SK-N-SH (cell line): ENCODE measurements at regions of chr10 and their contacts with region 1.

Region 1: DNA sequence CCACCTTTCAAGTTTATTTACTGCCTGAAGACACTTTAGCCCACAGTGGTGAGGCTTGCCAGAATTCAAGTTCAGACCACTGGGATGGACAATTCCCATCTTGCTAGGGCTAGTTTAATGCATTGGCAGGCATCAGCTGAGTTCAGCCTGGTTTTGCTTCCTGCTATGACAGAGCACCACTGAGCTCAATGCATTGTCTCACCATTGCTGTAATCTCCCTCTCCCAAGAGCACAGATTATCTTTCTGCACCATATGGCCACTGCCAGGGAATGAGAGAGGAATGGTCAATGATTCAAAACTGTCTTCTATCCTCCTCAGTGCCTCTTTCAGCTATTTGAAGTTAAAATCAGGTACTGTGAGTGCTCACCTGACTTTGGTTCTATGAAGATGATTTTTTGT is 160.8 kb downstream of the XPNPEP1 start:
- DNase-seq: no peak
- H3K4me3 ChIP-seq: no peak overlapping the region
- H3K27ac ChIP-seq: no peak overlapping the region
- H3K4me1 ChIP-seq: no peaks in the 10 kb centered on the region
- H3K27me3 ChIP-seq: no peaks in the 10 kb centered on the region
- CTCF ChIP-seq: no peak
- EP300 ChIP-seq: no peak
- RAD21 ChIP-seq: no peak

Region 2: DNA sequence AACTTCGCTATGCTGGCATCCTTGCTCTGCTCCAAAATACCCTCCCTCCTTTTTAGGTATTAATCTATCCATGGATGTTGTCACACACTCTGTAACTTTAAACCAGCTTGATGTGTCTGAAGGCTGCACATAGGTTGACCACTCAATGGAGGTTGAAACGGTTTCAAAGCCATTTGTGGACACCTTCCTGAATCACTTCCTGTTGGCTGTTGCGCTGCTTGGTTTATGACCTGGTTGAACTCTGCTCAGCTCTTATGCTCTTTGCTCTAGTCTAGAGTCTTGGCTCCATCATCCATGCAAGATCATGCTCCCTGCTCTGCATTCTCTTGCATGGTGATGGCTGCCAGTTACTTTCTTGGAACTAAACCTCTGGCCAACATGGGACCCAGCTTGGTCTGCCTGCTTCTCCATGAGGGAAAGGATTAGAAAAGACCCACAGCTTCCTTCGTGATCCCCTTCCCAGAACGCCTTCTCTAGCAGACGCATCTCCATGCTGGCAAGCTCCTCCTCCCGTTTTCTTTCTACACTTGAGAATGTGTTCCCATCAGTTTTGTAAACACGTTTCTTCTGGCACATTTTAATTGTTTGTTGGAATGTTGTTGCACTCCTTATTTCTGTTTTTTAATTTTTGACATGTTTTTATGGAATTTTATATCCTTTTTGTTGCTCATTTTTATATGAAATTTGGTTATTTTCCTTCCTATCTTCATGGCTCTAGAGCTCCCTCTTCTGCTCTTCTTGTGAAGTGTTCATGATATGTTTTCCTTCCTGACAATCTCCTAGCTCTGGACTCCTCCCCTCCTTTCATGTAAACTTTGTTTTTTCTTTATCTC is 10.9 kb after region 1 on chr10:
- CTCF ChIA-PET with region 1: interaction called, 12 read pairs
- POLR2A ChIA-PET with region 1: no interaction called
- DNase-seq: peak; percentile 30
- H3K4me3 ChIP-seq: peak overlapping the region in 1 of 2 experiments; percentile 29; a peak in 1 of 4 replicates
- H3K27ac ChIP-seq: no peak overlapping the region
- H3K4me1 ChIP-seq: no peaks in the 10 kb centered on the region
- H3K27me3 ChIP-seq: no peaks in the 10 kb centered on the region
- CTCF ChIP-seq: peak; percentile 78
- EP300 ChIP-seq: no peak
- RAD21 ChIP-seq: peak; percentile 72